AG04450 (cell line): ENCODE measurements at regions of chr20 and their contacts with region 1.

Region 1: DNA sequence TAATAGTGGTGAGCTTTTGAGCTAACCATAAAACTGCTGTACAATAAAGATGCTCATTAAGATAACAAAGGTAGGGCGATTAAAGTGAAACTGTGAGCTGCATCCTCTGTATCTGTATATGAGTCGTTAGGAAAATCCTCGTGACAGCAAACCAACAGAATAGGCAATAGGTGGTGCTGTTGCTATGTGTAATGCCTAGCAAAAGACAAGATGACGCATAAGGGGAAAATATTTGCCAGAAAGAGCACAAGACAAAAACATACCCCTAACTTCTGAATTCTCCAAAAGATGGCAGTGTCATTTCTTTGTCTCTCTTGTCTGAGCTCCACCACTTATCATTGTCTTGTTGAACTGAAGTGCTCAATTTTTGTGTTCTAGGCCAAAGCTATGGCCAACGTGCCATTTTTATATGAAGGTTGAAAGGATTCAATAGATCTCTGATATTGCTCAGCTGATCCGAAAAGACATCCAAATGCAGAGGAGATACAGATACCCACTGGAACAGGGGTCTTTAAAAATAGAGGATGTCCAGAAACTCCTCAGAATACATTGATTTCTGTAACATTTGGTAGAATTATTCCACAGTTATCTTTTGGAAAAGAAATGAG is 56.3 kb upstream of the ANKEF1 start:
- DNase-seq: peak; percentile 76
- H3K4me3 ChIP-seq: no peak overlapping the region
- H3K27ac ChIP-seq: no peak overlapping the region
- H3K27me3 ChIP-seq: no peaks in the 10 kb centered on the region
- CTCF ChIP-seq: peak; percentile 86

Region 2: GRCh38 chr20:9958693-9959092 is 19.8 kb before region 1 on chr20:
- CTCF ChIA-PET with region 1: interaction called, 14 read pairs
- POLR2A ChIA-PET with region 1: no interaction called
- DNase-seq: no peak
- H3K4me3 ChIP-seq: no peak overlapping the region
- H3K27ac ChIP-seq: no peak overlapping the region
- H3K27me3 ChIP-seq: no peaks in the 10 kb centered on the region
- CTCF ChIP-seq: no peak

Region 3: GRCh38 chr20:10090588-10091166 is 112.2 kb after region 1 on chr20:
- CTCF ChIA-PET with region 1: interaction called, 213 read pairs
- POLR2A ChIA-PET with region 1: no interaction called
- DNase-seq: peak; percentile 18
- H3K4me3 ChIP-seq: no peak overlapping the region
- H3K27ac ChIP-seq: no peak overlapping the region
- H3K27me3 ChIP-seq: no peaks in the 10 kb centered on the region
- CTCF ChIP-seq: peak; percentile 91

Region 4: DNA sequence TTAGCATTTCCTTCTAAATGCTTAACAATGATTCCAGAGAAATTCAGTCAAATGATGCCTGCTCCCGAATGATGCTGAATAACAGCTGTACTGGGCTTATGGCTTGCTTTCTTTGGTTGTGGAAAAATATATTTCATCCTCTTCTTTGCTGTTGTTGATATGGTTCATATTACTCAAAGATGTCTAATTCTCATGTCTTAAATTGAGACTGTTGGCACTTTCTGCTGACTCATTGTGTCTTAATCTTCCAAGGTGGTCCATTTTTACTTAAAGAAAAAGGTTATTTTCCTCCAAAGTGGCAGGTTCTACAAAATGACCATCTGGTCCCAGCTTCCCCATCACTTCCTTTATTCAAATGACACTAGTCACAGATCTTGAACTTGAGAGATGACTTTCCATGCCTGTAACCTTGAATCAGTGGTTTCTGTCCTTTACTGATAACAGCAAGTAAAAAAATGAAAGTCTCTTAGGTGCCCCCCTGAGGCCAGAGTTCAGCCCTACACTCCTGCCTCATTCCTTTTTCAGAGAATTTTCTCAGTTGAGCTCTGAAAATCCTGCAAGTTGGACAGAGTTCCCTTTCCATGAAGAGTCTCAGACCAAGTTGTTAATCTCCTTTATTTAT is 247.0 kb after region 1 on chr20:
- CTCF ChIA-PET with region 1: interaction called, 12 read pairs
- POLR2A ChIA-PET with region 1: no interaction called
- DNase-seq: no peak
- H3K4me3 ChIP-seq: no peak overlapping the region
- H3K27ac ChIP-seq: no peak overlapping the region
- H3K27me3 ChIP-seq: no peaks in the 10 kb centered on the region
- CTCF ChIP-seq: peak; percentile 41

Region 5: DNA sequence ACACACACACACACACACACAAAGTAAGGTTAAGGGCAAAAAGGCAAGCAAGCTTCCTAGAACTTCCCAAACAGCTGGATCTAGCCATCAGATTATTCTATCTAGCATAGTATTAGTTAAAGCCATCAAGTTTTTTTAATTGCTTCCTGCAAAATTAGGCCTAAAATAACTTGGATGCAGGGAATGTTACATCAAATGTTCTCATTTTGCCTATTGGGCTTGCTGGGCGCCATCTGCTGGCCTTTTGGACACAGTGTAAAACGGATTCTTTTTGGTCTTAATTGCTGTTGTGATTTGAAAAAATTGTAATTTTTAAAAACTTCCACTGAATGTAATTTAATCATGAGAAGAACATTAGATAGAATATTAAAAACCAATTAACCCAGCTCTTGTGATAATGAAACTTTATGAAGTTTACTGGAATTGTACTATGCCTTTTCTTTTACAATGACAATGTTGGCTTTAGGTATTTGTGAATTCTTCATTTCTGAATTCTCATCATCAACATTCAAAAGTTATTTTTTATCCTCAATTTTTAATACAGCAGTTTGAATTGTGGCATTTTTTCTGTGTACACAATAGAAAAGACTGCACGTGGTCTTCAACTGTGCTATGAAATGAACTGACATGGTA is 448.7 kb after region 1 on chr20:
- CTCF ChIA-PET with region 1: interaction called, 239 read pairs
- POLR2A ChIA-PET with region 1: no interaction called
- DNase-seq: peak; percentile 34
- H3K4me3 ChIP-seq: no peak overlapping the region
- H3K27ac ChIP-seq: no peak overlapping the region
- H3K27me3 ChIP-seq: no peaks in the 10 kb centered on the region
- CTCF ChIP-seq: peak; percentile 90

Region 6: GRCh38 chr20:10826111-10826510 is 847.6 kb after region 1 on chr20:
- CTCF ChIA-PET with region 1: no interaction called
- POLR2A ChIA-PET with region 1: no interaction called
- DNase-seq: peak; percentile 10
- H3K4me3 ChIP-seq: no peak overlapping the region
- H3K27ac ChIP-seq: no peak overlapping the region
- H3K27me3 ChIP-seq: no peaks in the 10 kb centered on the region
- CTCF ChIP-seq: no peak